ENCODE measurements at regions of chr16 and their contacts with region 1.

Region 1: DNA sequence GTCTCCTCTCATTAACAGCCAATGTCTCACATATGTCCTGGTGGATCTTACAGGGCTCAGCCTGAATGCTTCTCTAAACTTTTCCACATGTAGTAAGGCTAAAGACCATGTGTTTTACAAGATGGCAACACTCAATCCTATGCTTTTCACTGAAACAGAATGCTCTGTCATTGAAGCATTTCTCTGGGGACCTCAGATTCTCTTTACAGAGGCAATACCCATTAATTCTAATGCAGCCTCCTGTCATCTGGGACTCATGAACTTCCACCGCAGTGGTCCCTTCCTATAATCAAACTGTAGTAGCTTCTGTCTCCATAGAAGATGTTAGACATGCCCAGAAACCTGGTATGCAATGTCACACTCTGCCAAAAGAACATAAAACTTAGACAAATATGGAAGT is 926.6 kb upstream of the RBFOX1 start:
- DNase-seq: no peak
- H3K4me3 ChIP-seq: no peak overlapping the region
- H3K27ac ChIP-seq: no peak overlapping the region
- H3K4me1 ChIP-seq: no peaks in the 10 kb centered on the region
- H3K27me3 ChIP-seq: no peaks in the 10 kb centered on the region
- CTCF ChIP-seq: no peak
- POLR2A ChIP-seq: no peak

Region 2: GRCh38 chr16:6375465-6376075 is 30.5 kb before region 1 on chr16:
- intact Hi-C with region 1: loop called (anchors 2 kb)
- DNase-seq: no peak
- H3K4me3 ChIP-seq: no peak overlapping the region
- H3K27ac ChIP-seq: no peak overlapping the region
- H3K4me1 ChIP-seq: no peaks in the 10 kb centered on the region
- H3K27me3 ChIP-seq: no peaks in the 10 kb centered on the region
- CTCF ChIP-seq: no peak
- POLR2A ChIP-seq: no peak

Region 3: GRCh38 chr16:6439129-6439528 is 33.1 kb after region 1 on chr16:
- intact Hi-C with region 1: no loop called
- DNase-seq: no peak
- H3K4me3 ChIP-seq: no peak overlapping the region
- H3K27ac ChIP-seq: no peak overlapping the region
- H3K4me1 ChIP-seq: no peaks in the 10 kb centered on the region
- H3K27me3 ChIP-seq: no peaks in the 10 kb centered on the region
- CTCF ChIP-seq: no peak
- POLR2A ChIP-seq: no peak